ENCODE measurements at regions of chr14 and their contacts with region 1.

Region 1: GRCh38 chr14:21103710-21104447 is 3.0 kb downstream of the TMEM253 start:
- DNase-seq: peak; percentile 98
- H3K4me3 Mint-ChIP-seq: peak overlapping the region; percentile 87
- H3K27ac Mint-ChIP-seq: peak overlapping the region; percentile 84
- H3K4me1 Mint-ChIP-seq: peaks cover 29% of the 10 kb centered on the region
- H3K27me3 Mint-ChIP-seq: no peaks in the 10 kb centered on the region

Region 2: DNA sequence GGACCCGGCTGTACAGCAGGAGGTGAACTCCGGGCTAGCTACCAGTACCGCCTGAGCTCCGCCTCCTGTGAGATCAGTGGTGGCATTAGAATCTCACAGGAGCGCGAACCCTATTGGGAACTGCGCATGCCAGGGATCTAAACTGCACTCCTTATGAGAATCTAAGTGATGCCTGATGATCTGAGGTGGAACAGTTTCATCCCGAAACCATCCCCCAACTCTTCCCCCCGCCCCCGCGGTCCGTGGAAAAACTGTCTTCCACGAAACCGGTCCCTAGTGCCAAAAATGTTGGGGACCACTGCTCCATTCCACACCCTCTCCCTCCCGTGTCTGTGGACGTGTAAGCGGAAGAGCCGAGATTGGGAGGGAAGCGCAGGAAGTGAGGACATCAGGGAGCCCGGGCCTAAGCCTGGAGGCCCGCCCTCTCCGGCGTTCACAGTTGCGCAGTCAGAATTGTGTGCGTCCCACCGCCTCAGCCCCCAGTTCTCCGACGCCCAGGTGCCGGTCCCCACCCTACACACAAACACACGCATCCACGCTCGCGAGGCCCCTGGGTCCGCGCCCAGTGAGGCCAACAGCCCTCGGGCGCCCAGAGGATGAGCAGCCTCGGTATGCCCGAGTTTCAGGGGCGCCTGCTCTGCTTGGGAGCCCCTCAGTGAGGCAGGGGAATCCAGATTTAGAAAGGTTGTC is 421.3 kb before region 1 on chr14:
- CTCF ChIA-PET with region 1: no interaction called
- intact Hi-C with region 1: loop called (anchors 2 kb)
- DNase-seq: peak; percentile 81
- H3K4me3 Mint-ChIP-seq: no peak overlapping the region
- H3K27ac Mint-ChIP-seq: no peak overlapping the region
- H3K4me1 Mint-ChIP-seq: peaks cover 22% of the 10 kb centered on the region
- H3K27me3 Mint-ChIP-seq: no peaks in the 10 kb centered on the region

Region 3: DNA sequence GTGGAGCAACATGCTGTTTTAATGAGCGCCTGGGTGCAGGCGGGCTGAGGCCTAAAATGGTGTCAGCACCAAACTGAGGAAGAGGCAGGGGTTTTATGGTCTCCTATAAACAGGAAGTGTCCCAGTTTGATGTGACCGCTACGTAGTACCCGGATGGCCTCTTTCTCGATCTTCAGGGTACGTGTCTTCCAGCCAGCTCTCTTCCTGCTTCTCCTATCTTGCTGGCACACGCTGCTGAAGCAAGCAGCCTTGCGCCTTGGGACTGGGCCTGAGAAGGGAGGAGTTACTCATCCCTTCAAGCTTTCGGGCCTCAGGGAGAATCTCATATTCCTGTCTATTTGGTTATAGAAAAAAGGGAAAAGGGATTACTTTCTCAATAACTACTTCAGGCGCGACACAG is 273.0 kb before region 1 on chr14:
- CTCF ChIA-PET with region 1: no interaction called
- intact Hi-C with region 1: no loop called
- DNase-seq: no peak
- H3K4me3 Mint-ChIP-seq: no peak overlapping the region
- H3K27ac Mint-ChIP-seq: no peak overlapping the region
- H3K4me1 Mint-ChIP-seq: no peaks in the 10 kb centered on the region
- H3K27me3 Mint-ChIP-seq: no peaks in the 10 kb centered on the region

Region 4: DNA sequence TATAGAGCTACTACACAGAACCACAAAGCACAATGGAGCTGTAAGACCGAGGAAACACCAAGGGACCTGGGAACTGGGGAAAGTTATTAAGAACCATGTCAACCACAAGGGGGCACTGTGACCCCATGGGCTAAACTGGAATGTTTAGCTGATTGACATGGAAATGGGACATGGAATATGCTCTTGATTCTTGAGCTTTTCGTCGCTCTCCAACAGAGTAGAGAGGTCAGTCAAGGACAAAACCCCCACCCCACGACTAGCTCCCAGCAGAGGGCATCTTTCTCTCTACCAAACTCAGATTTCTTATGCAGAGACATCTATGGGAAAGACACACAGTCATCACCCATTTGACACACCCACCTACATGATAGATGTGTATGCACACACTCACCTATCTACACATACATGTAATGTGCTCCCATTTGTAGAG is 89.1 kb before region 1 on chr14:
- CTCF ChIA-PET with region 1: interaction called, 260 read pairs
- intact Hi-C with region 1: loop called (anchors 1 kb)
- DNase-seq: peak; percentile 91
- H3K4me3 Mint-ChIP-seq: no peak overlapping the region
- H3K27ac Mint-ChIP-seq: no peak overlapping the region
- H3K4me1 Mint-ChIP-seq: no peaks in the 10 kb centered on the region
- H3K27me3 Mint-ChIP-seq: peaks cover 5% of the 10 kb centered on the region

Region 5: GRCh38 chr14:21084988-21085853 is 18.7 kb before region 1 on chr14:
- CTCF ChIA-PET with region 1: interaction called, 30 read pairs
- intact Hi-C with region 1: loop called (anchors 1 kb)
- DNase-seq: no peak
- H3K4me3 Mint-ChIP-seq: no peak overlapping the region
- H3K27ac Mint-ChIP-seq: no peak overlapping the region
- H3K4me1 Mint-ChIP-seq: peaks cover 13% of the 10 kb centered on the region
- H3K27me3 Mint-ChIP-seq: no peaks in the 10 kb centered on the region

Region 6: GRCh38 chr14:21308479-21309237 is 204.8 kb after region 1 on chr14:
- CTCF ChIA-PET with region 1: interaction called, 3 read pairs
- intact Hi-C with region 1: loop called (anchors 2 kb)
- DNase-seq: peak; percentile 94
- H3K4me3 Mint-ChIP-seq: peak overlapping the region; percentile 66
- H3K27ac Mint-ChIP-seq: peak overlapping the region; percentile 87
- H3K4me1 Mint-ChIP-seq: peaks cover 23% of the 10 kb centered on the region
- H3K27me3 Mint-ChIP-seq: no peaks in the 10 kb centered on the region

Region 7: DNA sequence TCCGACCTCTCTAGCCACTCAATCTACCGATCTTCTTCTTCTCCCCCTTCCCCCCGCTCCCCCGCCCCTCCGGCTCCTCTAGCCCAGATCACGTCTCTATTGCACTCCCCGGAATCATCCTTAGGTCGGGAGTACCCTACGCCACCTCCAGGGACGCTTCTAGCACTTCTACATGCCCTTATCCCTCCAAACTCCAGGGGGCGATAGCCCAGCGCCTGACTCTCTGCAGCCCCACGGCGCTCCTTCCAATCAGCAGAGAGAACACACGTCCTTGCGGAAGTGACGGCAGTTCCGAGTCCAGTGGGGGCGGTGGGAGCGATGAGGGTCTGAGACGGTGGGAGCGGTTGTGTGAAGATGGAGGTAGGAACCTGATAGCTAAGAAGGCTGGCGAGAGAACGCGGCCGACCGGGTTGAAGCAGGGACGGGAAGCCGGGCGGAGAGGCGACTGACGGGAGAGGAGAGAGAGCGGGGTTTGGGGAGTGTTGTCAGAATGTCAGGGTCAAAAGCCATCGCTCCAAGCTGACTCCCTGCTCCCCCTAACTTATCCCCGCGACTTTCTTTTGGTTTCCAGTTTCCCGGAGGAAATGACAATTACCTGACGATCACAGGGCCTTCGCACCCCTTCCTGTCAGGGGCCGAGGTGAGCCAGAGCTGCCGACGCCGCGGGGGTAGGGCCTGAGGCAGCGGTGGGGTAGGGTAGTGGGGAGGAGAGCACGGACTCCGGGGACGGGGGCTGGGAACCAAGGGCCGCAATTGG is 373.2 kb after region 1 on chr14 and contains the starts of genes RAB2B and TOX4:
- CTCF ChIA-PET with region 1: interaction called, 3 read pairs
- intact Hi-C with region 1: loop called (anchors 1 kb)
- DNase-seq: peak; percentile 97
- H3K4me3 Mint-ChIP-seq: peak within 1 kb of the TSS; percentile 100
- H3K27ac Mint-ChIP-seq: peak within 1 kb of the TSS; percentile 98
- H3K4me1 Mint-ChIP-seq: peaks cover 31% of the 10 kb centered on the region
- H3K27me3 Mint-ChIP-seq: no peaks in the 10 kb centered on the region
- total RNA-seq, gene RAB2B: 20.5 to 21.4 TPM
- total RNA-seq, gene TOX4: 57.4 to 58.6 TPM

Region 8: GRCh38 chr14:22314181-22314820 is 1210.4 kb after region 1 on chr14:
- CTCF ChIA-PET with region 1: no interaction called
- intact Hi-C with region 1: no loop called
- DNase-seq: peak; percentile 4
- H3K4me3 Mint-ChIP-seq: peak overlapping the region; percentile 47
- H3K27ac Mint-ChIP-seq: peak overlapping the region; percentile 81
- H3K4me1 Mint-ChIP-seq: no peaks in the 10 kb centered on the region
- H3K27me3 Mint-ChIP-seq: no peaks in the 10 kb centered on the region

Measured in activated naive CD4-positive, alpha-beta T cell treated with anti-CD3 and anti-CD28 coated beads for 36 hours (primary cell).